ENCODE measurements at regions of chr7 and their contacts with region 1.

Region 1: GRCh38 chr7:108459931-108460551 is 3.8 kb upstream of the NRCAM start:
- DNase-seq: peak; percentile 66
- H3K4me3 ChIP-seq: no peak overlapping the region
- H3K27ac ChIP-seq: peak overlapping the region in 1 of 2 experiments; percentile 8; a peak in 1 of 4 replicates
- H3K4me1 ChIP-seq: peaks cover 0 to 14% of the 10 kb centered on the region in 2 experiments; a peak in 2 of 4 replicates
- H3K27me3 ChIP-seq: peaks cover 30% of the 10 kb centered on the region
- CTCF ChIP-seq: peak; percentile 75
- EP300 ChIP-seq: no peak; a peak in 1 of 4 replicates
- RAD21 ChIP-seq: peak; percentile 90

Region 2: GRCh38 chr7:108181073-108181985 is 278.7 kb before region 1 on chr7:
- CTCF ChIA-PET with region 1: interaction called, 32 read pairs
- POLR2A ChIA-PET with region 1: interaction called, 9 read pairs
- DNase-seq: peak; percentile 57
- H3K4me3 ChIP-seq: no peak overlapping the region
- H3K27ac ChIP-seq: peak overlapping the region in 1 of 2 experiments; percentile 60; a peak in 1 of 4 replicates
- H3K4me1 ChIP-seq: peaks cover 0 to 9% of the 10 kb centered on the region in 2 experiments; a peak in 2 of 4 replicates
- H3K27me3 ChIP-seq: no peaks in the 10 kb centered on the region
- CTCF ChIP-seq: peak; percentile 96
- EP300 ChIP-seq: 0 out of 4 replicates have a peak, but pooled peaks of 1 of the 2 experiments have one; percentile 13
- RAD21 ChIP-seq: peak; percentile 96

Region 3: DNA sequence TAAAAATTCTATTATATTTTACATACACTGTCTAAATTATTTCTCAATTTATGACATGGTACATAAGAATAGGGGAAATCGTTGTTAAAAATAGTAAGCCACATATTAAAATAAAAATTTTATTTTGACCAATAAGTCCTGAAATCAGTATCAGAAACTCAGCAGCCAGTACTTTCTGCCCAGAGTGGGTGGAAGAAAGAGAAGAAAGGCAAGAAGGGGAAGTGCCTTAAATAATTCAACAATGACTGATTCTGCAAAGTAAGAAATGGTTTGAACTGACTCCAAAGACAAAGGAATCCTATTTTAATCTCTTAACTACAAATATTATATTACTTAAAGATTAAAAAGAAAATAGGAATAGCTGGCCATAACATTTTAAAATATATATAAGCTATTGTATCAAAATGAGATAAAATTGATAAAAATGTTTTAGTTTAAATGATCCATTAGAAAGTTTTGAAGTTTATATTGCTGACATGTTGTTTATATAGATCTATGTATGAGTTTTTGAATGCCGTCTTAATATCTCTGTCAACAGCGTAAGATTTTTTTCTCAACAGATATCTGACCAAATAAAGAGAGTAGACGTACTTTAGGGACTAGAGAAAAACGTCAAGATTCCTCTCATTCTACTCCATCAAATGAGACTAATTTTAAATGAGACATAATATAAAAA is 26.4 kb after region 1 on chr7:
- CTCF ChIA-PET with region 1: interaction called, 14 read pairs
- POLR2A ChIA-PET with region 1: no interaction called
- DNase-seq: no peak
- H3K4me3 ChIP-seq: no peak overlapping the region
- H3K27ac ChIP-seq: no peak overlapping the region
- H3K4me1 ChIP-seq: peaks cover 0 to 5% of the 10 kb centered on the region in 2 experiments; a peak in 1 of 4 replicates
- H3K27me3 ChIP-seq: no peaks in the 10 kb centered on the region
- CTCF ChIP-seq: no peak
- EP300 ChIP-seq: no peak
- RAD21 ChIP-seq: no peak